SK-N-SH (cell line): ENCODE measurements at regions of chr3 and their contacts with region 1.

Region 1: DNA sequence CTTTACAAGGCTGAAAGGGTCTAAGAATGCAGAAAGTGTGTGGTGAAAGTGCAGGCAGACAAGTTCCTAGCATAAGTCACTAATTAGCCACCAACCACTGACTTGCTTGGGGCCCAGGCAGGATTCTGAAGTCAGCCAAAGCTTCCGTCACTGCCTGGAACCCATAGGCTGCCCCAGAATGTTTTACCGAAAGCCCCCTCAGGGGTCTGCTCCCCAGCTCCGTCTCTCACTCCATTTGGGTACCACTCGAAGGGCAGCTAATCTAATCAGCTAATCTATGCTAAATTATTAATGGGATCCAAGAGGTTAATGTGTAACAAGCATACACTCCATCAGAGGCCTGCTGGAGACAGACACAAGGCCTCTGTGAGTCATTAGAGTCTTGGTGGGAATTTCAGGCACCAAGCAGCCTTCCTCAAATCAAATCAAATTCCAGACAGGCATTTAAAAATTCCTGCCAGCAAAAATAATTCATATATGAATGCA is 13.2 kb downstream of the ADAMTS9 start:
- DNase-seq: peak; percentile 56
- H3K4me3 ChIP-seq: no peak overlapping the region
- H3K27ac ChIP-seq: peak overlapping the region; percentile 85 to 89
- H3K4me1 ChIP-seq: peaks cover 0 to 55% of the 10 kb centered on the region in 2 experiments; a peak in 2 of 4 replicates
- H3K27me3 ChIP-seq: no peaks in the 10 kb centered on the region
- CTCF ChIP-seq: no peak
- EP300 ChIP-seq: peak; percentile 12 to 99; a peak in 3 of 4 replicates
- RAD21 ChIP-seq: no peak; the same call in 1 of the 2 replicates

Region 2: DNA sequence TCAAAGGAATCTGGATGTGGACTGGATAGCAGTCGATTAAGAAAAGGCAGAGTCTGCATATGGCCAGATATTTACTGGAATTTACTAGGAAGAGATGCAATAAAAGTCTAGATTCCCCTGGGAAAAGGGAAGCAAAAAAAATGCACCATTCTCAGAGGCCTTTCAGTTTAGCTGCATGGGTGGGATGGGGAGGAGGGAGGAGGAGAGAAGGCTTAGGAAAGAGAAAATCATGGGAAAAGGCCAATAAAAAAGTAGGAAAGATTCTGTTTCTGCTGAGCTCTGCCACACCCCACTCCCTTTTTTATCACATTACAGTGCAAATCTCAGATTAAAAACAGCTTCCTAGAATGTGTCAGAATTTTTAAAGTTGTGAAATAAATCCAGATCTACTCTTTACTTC is 90.5 kb before region 1 on chr3:
- CTCF ChIA-PET with region 1: no interaction called
- POLR2A ChIA-PET with region 1: no interaction called
- DNase-seq: no peak
- H3K4me3 ChIP-seq: no peak overlapping the region
- H3K27ac ChIP-seq: peak overlapping the region in 1 of 2 experiments; percentile 22; a peak in 1 of 4 replicates
- H3K4me1 ChIP-seq: peaks cover 0 to 3% of the 10 kb centered on the region in 2 experiments; a peak in 2 of 4 replicates
- H3K27me3 ChIP-seq: no peaks in the 10 kb centered on the region
- CTCF ChIP-seq: no peak
- EP300 ChIP-seq: no peak
- RAD21 ChIP-seq: no peak

Region 3: GRCh38 chr3:64612082-64612860 is 62.4 kb before region 1 on chr3:
- CTCF ChIA-PET with region 1: no interaction called
- POLR2A ChIA-PET with region 1: interaction called, 10 read pairs
- DNase-seq: peak; percentile 20
- H3K4me3 ChIP-seq: no peak overlapping the region; a peak in 1 of 4 replicates
- H3K27ac ChIP-seq: peak overlapping the region in 1 of 2 experiments; percentile 96; a peak in 2 of 4 replicates
- H3K4me1 ChIP-seq: peaks cover 0 to 50% of the 10 kb centered on the region in 2 experiments; a peak in 2 of 4 replicates
- H3K27me3 ChIP-seq: no peaks in the 10 kb centered on the region
- CTCF ChIP-seq: no peak
- EP300 ChIP-seq: no peak; a peak in 1 of 4 replicates
- RAD21 ChIP-seq: no peak